Aorta (tissue), 5 donors: ENCODE measurements at regions of chr7 and their contacts with region 1.

Region 1: DNA sequence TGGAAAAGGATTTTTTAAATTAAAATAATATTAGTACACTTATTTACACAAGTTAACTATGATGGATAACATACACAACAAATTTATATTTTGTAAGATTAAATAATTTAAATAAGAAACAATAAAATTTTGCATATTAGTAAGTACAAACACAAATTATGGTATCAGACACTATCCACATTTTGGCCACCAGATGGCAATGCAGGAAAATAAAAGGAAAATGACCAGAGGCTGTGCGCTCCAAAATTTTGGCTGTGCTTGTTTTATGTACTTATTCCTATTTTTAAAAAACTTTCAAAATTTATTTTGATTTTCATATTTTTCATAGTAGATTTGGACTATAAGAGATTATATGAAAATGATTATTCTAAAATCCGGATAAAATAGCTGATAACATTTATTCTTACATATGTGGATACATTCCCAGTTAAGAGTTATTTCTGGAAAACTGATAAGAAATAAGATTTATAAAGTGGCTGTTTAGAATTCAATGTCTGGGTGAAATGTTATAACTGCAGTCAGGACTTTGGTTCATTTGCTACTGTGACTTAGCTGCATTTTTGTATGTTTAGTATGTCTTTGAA is 274.7 kb upstream of the HGF start:
- DNase-seq: no peak
- ATAC-seq: no peak
- H3K4me3 ChIP-seq: no peak overlapping the region
- H3K27ac ChIP-seq: no peak overlapping the region
- H3K4me1 ChIP-seq: no peaks in the 10 kb centered on the region
- H3K27me3 ChIP-seq: no peaks in the 10 kb centered on the region

Region 2: DNA sequence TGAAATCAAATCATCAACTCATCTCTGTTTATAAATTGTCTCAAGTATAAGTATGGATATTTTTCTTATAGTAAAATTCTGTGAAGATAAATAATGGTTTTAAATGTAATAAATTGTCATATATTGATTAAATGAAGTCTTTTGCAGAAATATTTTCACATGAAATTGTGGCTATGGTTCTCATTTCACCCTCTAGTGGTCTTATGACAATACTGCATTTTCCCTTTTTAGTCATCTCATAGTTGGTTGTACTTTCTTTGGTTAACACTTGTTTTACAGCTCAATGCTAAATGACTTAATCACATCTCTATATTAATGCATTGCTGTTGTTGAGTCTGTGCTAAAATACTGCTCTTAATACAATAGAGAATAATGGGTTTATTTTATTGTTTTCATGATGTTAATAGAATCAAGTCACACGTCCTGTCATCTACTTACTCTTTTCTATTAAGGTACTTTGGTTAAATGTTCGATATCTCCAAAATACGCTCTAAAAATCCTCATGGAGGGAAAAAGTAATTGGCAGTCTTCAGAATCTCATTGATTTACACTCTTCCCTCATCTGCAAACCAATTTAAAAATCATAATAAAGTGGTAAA is 437.0 kb after region 1 on chr7:
- intact Hi-C with region 1: loop called in 1 of 2 experiments (anchors 10 kb)
- DNase-seq: no peak
- ATAC-seq: no peak
- H3K4me3 ChIP-seq: no peak overlapping the region
- H3K27ac ChIP-seq: no peak overlapping the region
- H3K4me1 ChIP-seq: no peaks in the 10 kb centered on the region
- H3K27me3 ChIP-seq: no peaks in the 10 kb centered on the region

Region 3: GRCh38 chr7:82572195-82572880 is 527.7 kb after region 1 on chr7:
- intact Hi-C with region 1: loop called (anchors 2 to 5 kb)
- DNase-seq: peak; percentile 88 to 92
- ATAC-seq: peak; percentile 86
- H3K4me3 ChIP-seq: no peak overlapping the region
- H3K27ac ChIP-seq: no peak overlapping the region
- H3K4me1 ChIP-seq: no peaks in the 10 kb centered on the region
- H3K27me3 ChIP-seq: no peaks in the 10 kb centered on the region